Esophagus squamous epithelium (tissue), 5 donors: ENCODE measurements at regions of chr1 and their contacts with region 1.

Region 1: DNA sequence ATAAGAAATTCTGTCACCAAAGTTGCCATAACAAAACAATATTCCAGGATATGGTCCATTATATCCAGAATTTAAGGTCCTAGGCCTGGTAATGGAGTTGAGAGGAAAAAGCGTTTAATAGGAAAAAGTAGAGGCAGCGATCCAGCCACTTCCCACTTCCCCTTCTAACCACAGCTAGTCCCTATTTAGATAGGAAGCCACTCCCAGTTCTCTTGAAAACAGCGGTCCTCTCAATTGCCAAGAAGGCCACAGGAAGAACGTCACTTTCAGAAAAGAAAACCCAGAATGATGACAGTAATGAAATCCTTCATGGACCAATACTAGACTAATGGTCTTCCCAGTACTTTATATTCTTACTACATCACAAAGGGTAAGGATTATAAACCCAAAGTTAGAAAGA is 38.6 kb downstream of the ABL2 start:
- DNase-seq: no peak
- H3K4me3 ChIP-seq: no peak overlapping the region
- H3K27ac ChIP-seq: peak overlapping the region in 2 of 4 donors; percentile 55 to 63
- H3K4me1 ChIP-seq: peaks cover 0 to 2% (median 0%) of the 10 kb centered on the region in 3 donors
- H3K27me3 ChIP-seq: no peaks in the 10 kb centered on the region
- CTCF ChIP-seq: no peak
- POLR2A ChIP-seq: no peak

Region 2: GRCh38 chr1:179077396-179077795 is 113.5 kb before region 1 on chr1:
- intact Hi-C with region 1: no loop called
- DNase-seq: no peak
- H3K4me3 ChIP-seq: no peak overlapping the region
- H3K27ac ChIP-seq: no peak overlapping the region
- H3K4me1 ChIP-seq: peaks cover 3 to 21% (median 5%) of the 10 kb centered on the region in 3 donors
- H3K27me3 ChIP-seq: no peaks in the 10 kb centered on the region
- CTCF ChIP-seq: no peak
- POLR2A ChIP-seq: no peak

Region 3: GRCh38 chr1:179121159-179121938 is 69.5 kb before region 1 on chr1:
- intact Hi-C with region 1: loop called (anchors 5 kb)
- DNase-seq: no peak
- H3K4me3 ChIP-seq: no peak overlapping the region
- H3K27ac ChIP-seq: no peak overlapping the region
- H3K4me1 ChIP-seq: peaks cover 0 to 21% (median 0%) of the 10 kb centered on the region in 3 donors
- H3K27me3 ChIP-seq: no peaks in the 10 kb centered on the region
- CTCF ChIP-seq: peak; percentile 31 to 56 (median 46)
- POLR2A ChIP-seq: no peak

Region 4: DNA sequence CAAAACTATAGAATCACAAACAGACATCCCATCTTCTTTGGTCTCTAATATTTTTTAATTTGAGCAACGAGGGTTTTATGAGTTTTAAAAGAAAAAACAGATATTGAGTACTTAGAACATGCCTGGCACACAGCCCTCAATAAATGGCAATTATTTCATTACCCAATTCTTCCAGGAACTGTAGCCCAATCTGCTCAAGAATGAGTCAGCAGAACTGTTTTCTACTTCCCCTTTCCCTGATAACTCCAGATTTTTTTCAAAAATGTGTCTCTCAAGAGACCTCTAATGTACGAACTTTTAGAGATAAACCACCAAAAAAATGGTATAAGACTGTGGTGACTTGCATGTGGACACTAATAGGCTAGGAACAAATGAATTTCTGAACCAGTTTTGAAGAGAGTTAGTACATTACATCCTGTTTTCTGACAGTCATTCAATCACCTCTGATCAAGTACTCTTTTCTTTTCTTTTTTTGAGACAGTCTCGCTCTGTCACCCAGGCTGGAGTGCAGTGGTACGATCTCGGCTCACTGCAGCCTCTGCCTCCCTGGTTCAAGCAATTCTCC is 27.2 kb after region 1 on chr1:
- intact Hi-C with region 1: no loop called
- DNase-seq: no peak
- H3K4me3 ChIP-seq: no peak overlapping the region
- H3K27ac ChIP-seq: peak overlapping the region; percentile 21 to 64 (median 45)
- H3K4me1 ChIP-seq: peaks cover 4 to 9% (median 6%) of the 10 kb centered on the region in 3 donors
- H3K27me3 ChIP-seq: no peaks in the 10 kb centered on the region
- CTCF ChIP-seq: no peak
- POLR2A ChIP-seq: no peak